Dendritic cell treated with granulocyte-macrophage colony-stimulating factor and Interleukin-4, amounts not matched to agents 40 ng/mL and 50 ng/mL, for 4 days (primary cell): ENCODE measurements at regions of chr1 and their contacts with region 1.

Region 1: DNA sequence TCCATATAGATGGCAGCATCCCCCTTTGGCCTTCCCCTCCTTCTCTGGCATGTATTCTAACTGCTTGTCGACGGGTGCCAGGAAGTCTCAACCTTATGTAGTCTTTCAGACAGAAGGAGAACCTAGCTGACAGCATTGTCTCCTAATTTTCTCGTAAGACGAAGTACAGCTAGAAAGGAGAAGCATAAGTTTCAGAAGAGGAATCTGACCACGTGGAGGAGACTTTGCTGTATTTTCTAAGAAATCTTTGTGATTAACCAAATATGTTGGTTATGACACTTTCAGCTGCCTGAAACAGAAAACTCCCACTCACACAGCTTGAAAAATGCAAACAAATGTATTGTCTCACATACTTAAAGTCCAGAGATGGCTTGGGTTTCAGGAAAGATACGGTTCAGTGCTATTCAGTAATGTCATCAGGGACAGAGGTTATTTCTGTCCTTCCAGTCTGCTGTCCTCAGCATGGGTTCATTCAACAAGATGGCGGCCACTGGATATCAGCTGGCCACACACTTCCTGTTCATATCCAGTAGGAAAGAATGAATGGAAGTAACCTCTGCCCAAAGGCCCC is 109.5 kb upstream of the ZNF648 start:
- H3K4me3 Mint-ChIP-seq: peak overlapping the region; percentile 25
- H3K27ac Mint-ChIP-seq: peak overlapping the region; percentile 94
- H3K4me1 Mint-ChIP-seq: peaks cover 44% of the 10 kb centered on the region
- H3K27me3 Mint-ChIP-seq: no peaks in the 10 kb centered on the region

Region 2: DNA sequence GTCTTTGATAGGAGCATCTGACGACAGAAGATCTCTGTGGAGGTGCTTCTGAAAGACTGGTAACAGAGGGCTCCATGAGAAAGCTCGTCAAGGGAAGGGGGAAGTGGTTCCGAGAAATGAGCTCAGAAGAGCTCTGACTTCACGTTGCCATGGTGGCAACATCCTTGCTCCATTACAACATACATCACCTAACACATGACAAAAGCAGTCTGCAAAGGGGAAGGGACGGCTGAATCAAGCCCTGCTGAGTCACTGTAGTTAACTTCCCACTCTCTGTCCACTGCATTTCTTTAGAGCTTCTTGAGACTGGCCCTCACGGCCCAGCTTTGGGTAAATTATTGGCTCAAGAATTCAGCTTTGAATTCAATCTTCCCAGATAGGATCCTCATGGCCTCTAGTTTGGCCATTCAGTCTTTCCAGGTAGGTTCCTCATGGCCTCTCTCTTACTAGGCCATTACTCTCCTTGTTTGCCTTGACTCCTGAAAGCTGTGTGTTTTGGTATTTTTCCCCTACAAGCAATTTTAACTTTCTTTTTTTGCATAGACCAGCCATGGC is 21.5 kb before region 1 on chr1:
- intact Hi-C with region 1: loop called (anchors 2 kb)
- H3K4me3 Mint-ChIP-seq: peak overlapping the region; percentile 52
- H3K27ac Mint-ChIP-seq: peak overlapping the region; percentile 98
- H3K4me1 Mint-ChIP-seq: peaks cover 70% of the 10 kb centered on the region
- H3K27me3 Mint-ChIP-seq: no peaks in the 10 kb centered on the region